Calu3 (cell line): ENCODE measurements at regions of chr22 and their contacts with region 1.

Region 1: DNA sequence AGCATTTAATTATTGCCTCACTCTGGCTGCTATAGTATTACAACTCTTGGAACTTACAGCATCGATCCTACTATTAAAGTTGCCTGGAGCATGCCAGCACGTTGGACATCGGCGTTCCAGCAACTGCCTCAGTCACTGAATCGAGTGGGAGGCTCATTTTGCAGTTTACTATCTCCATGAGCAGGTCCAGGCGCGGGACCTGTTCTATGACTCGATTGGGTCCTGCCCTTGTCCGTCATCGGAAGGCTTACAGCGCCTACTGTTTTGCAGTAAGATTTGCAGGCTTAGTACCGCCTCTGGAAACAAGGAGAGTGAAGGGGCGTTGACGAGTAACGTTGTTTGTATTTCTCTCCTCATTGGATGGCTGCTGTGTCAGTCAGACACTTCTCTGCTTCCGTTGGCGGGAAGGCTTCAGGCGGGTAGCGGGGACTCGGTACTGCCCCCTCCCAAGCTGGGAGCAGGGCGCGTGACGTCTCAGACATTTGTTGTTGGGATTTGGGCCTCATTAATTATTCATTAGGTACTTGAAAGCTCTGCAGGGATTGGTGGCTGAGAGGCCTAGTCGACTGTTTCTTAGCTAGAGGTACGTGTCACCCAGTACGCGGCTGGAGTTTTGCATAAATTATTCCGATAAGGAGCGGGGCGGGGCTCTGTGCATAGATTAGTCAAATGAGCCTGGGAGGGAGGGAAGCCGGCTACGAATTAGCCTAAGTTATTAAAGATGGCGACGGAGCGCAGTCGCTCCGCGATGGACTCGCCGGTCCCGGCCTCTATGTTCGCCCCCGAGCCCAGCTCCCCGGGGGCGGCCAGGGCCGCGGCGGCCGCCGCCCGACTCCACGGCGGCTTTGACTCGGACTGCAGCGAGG is at the start of gene GTPBP1:
- DNase-seq: peak; percentile 97
- H3K4me3 Mint-ChIP-seq: peak within 1 kb of the TSS; percentile 90
- H3K27ac Mint-ChIP-seq: peak within 1 kb of the TSS; percentile 92
- H3K4me1 Mint-ChIP-seq: peaks cover 37% of the 10 kb centered on the region
- H3K27me3 Mint-ChIP-seq: no peaks in the 10 kb centered on the region
- CTCF ChIP-seq: no peak
- total RNA-seq, gene GTPBP1: 79.1 and 91.4 TPM in 2 replicates

Region 2: DNA sequence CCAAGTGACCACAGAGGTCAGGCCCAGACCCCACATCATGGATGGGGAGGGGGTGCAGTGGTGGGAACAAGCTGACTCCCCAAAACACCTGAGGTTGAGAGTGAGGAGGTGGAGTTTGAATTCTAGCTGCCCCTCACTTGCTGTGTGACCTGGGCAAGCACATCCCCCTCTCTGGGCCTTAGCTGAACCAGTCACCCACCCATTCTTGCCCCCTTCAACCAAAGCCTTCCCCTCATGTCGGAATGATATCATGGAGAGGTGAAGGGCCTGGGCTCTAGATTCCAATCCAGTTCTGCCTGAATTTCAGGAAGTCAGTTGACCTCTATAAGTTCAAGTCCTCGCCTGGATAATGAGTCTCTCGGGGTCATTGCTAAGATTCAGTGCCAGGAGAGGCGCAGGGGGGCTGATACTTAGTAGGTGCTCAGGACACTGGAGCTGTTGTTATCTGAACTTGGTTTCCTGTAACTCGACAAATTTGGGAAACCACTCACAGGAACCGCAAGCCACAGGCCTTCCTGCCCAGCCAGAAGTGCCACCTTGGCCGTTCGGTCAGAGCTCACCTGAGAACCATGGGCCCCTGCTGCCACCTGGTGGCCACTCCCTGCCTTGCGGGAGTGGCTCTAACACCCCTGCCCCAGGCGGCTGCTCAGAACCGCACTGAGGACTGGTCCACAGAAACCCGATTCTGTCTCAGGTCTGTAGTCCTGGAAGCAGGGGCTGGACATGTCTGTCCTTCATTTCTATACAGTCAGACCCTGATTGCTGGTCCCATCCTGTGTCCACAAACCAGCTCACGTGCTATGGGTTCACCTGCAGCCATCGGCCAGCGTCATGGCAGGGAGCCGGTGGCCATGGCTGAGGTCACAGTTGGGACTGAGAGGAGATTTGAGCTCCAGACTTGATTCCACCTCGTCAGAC is 1138.3 kb before region 1 on chr22:
- CTCF ChIA-PET with region 1: interaction called, 10 read pairs
- intact Hi-C with region 1: no loop called
- DNase-seq: peak; percentile 96
- H3K4me3 Mint-ChIP-seq: peak overlapping the region; percentile 87
- H3K27ac Mint-ChIP-seq: peak overlapping the region; percentile 99
- H3K4me1 Mint-ChIP-seq: peaks cover 98% of the 10 kb centered on the region
- H3K27me3 Mint-ChIP-seq: no peaks in the 10 kb centered on the region
- CTCF ChIP-seq: peak; percentile 97

Region 3: DNA sequence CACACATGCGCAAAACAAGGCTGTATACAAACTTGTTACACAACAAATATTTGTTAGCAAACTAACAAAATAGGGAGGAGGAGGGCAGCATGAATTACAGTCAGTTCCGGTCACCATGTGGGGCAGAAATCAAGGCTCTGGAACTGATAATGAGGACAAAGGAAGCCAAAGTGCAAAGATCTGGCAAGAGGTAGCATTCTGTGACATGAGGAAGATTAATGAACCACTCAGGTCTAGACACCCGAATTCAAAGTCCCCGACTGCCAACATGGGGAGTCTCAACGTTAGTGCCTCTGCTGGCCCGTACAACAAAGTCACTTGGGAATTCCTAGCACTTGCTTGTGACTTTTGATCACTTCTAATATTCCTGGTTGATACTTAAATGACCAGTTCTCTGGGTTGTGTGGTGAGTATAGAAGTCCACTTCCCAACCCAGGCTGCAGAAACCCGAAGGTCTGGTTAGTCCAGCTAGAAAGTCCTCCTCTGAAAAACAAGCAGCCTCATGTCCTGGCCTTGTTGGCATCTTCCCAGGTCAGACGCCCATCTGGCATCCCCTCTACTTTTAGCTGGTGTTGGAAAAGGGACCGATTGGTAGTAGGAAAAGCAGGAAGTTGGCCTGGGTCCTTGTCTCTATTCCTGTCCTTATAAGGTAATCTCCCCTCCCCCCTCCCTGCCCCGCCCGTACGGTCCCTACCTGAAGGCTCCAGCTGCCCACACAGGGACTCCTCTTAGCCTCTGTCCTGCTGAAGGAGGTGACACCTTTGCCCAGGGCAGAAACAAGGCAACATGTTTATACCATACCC is 48.7 kb after region 1 on chr22:
- CTCF ChIA-PET with region 1: no interaction called
- intact Hi-C with region 1: loop called (anchors 5 kb)
- DNase-seq: peak; percentile 74
- H3K4me3 Mint-ChIP-seq: peak overlapping the region; percentile 76
- H3K27ac Mint-ChIP-seq: peak overlapping the region; percentile 42
- H3K4me1 Mint-ChIP-seq: peaks cover 22% of the 10 kb centered on the region
- H3K27me3 Mint-ChIP-seq: no peaks in the 10 kb centered on the region
- CTCF ChIP-seq: no peak